Panc1 (cell line): ENCODE measurements at regions of chr2 and their contacts with region 1.

Region 1: DNA sequence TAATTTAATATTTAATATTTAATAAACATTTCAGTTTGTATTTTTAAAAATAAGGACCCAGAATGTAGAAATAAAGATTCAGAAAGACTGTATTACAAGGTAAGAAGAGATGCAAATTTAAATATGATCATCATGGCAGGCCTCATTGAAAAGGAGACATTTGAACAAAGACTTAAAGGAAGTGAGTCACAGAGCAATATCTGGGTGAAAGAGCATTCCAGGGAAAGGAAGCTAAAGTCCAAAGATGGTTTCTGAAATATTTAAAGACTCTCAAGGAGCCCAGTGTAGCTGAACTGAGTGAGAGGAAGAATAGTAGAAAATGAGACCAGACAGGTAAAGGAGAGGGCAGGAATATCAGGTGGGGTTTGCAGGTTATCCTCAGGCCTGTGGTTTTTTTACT is 5.9 kb downstream of the SCYGR4 start:
- DNase-seq: no peak
- ATAC-seq: no peak
- H3K4me3 ChIP-seq: no peak overlapping the region
- H3K27ac ChIP-seq: no peak overlapping the region
- H3K4me1 ChIP-seq: no peaks in the 10 kb centered on the region
- H3K27me3 ChIP-seq: 0 out of 2 replicates have a peak, but pooled peaks cover 2% of the 10 kb centered on the region
- CTCF ChIP-seq: no peak

Region 2: GRCh38 chr2:227147023-227147422 is 476.2 kb before region 1 on chr2:
- CTCF ChIA-PET with region 1: no interaction called
- POLR2A ChIA-PET with region 1: no interaction called
- in situ Hi-C with region 1: no loop called
- intact Hi-C with region 1: no loop called
- DNase-seq: no peak
- ATAC-seq: no peak
- H3K4me3 ChIP-seq: no peak overlapping the region
- H3K27ac ChIP-seq: no peak overlapping the region
- H3K4me1 ChIP-seq: no peaks in the 10 kb centered on the region
- H3K27me3 ChIP-seq: peaks cover 7% of the 10 kb centered on the region
- CTCF ChIP-seq: no peak

Region 3: DNA sequence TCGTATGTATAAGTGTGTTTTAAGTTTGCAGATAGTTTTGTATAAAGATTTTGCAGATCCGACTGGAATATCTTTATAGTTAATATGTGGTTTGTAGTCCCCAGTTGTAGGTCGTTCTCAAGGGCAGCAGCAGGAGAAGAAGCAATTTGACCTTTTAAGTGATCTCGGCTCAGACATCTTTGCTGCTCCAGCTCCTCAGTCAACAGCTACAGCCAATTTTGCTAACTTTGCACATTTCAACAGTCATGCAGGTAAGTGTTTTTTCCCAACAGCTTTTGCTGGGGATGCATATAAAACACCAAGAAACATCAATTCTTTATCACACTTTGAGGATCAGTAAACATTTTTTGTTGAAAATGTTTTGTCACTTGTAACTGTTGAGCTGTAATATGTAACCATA is 98.6 kb before region 1 on chr2:
- CTCF ChIA-PET with region 1: no interaction called
- POLR2A ChIA-PET with region 1: interaction called, 18 read pairs
- in situ Hi-C with region 1: no loop called
- intact Hi-C with region 1: no loop called
- DNase-seq: no peak
- ATAC-seq: no peak
- H3K4me3 ChIP-seq: no peak overlapping the region
- H3K27ac ChIP-seq: no peak overlapping the region
- H3K4me1 ChIP-seq: no peaks in the 10 kb centered on the region
- H3K27me3 ChIP-seq: no peaks in the 10 kb centered on the region
- CTCF ChIP-seq: no peak